ENCODE measurements at regions of chr7 and their contacts with region 1.

Region 1: GRCh38 chr7:48299580-48300169 is 128.4 kb downstream of the ABCA13 start:
- DNase-seq: peak; percentile 49
- H3K4me3 ChIP-seq: no peak overlapping the region
- H3K27ac ChIP-seq: no peak overlapping the region
- H3K27me3 ChIP-seq: no peaks in the 10 kb centered on the region
- CTCF ChIP-seq: peak; percentile 88

Region 2: GRCh38 chr7:48274662-48275061 is 25.0 kb before region 1 on chr7:
- CTCF ChIA-PET with region 1: interaction called, 18 read pairs
- POLR2A ChIA-PET with region 1: no interaction called
- DNase-seq: no peak
- H3K4me3 ChIP-seq: no peak overlapping the region
- H3K27ac ChIP-seq: no peak overlapping the region
- H3K27me3 ChIP-seq: no peaks in the 10 kb centered on the region
- CTCF ChIP-seq: no peak

Region 3: DNA sequence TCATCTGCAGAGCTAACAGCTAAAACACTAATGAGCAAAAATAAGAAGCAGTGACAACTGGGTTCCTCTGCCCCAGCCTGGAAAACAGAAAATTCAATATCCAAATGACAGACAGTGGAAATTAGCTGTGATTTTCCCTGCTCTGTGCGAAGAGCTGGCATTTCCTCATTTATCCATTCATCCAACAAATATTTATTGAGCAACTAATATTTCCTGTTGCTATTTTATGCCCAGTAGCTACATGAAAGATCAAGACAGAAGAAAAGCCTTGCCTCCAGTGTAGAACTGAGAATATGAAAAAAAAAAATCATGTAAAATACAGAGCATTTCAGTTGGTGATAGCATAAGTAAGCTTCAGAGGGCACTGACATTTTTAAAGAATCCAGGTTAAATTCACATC is 12.5 kb after region 1 on chr7:
- CTCF ChIA-PET with region 1: interaction called, 28 read pairs
- POLR2A ChIA-PET with region 1: no interaction called
- DNase-seq: no peak
- H3K4me3 ChIP-seq: no peak overlapping the region
- H3K27ac ChIP-seq: no peak overlapping the region
- H3K27me3 ChIP-seq: no peaks in the 10 kb centered on the region
- CTCF ChIP-seq: no peak

Measured in AG04450 (cell line).